Right ventricle myocardium inferior (tissue), 1 donor: ENCODE measurements at regions of chr7 and their contacts with region 1.

Region 1: DNA sequence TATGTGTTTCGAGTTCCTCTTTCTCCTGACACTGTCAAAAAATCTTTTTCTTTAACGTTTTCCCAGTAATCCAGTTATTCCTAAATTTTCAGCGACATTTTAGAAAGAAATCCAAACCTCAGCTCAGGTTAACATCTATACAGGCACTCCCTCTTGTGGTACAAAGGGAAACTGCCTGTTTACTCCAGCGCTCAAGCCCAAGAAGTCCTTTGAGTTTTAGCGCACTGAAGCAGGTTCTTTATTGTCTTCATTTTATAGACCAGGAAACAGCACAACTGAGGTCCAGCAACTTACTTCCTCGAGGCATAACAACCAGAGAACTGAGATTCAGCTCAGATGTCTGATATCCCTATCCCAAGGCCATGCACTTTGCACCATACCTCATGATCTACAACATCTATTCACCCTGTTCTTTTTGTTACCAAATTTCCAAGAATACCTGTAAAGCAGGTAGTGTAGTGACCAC is 287.2 kb upstream of the MKLN1 start:
- DNase-seq: no peak
- ATAC-seq: peak; percentile 53

Region 2: DNA sequence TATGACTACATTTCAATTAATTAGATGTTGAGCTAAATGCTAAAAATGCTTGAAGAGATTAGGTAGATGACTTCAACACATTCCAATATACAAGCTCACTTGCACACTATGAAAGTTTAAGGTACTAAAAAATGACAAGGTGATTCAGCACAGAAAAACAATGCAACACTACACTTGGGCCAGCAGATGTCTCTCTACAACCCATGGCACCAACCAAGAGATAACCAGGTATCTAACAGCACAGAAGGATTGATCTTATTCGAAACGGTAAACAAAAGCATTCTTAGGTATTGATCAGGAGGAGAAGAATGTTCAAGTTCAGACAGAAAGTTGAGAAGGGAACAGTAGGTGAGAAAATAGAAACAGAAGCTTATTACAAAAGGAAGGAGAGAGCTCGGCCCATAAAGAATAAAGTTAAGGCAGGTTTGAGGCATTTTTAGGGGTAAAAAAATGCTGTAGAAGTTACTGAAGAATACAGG is 58.3 kb before region 1 on chr7:
- intact Hi-C with region 1: loop called (anchors 2 kb)
- DNase-seq: no peak
- ATAC-seq: peak; percentile 29